HepG2 (cell line): ENCODE measurements at regions of chr18 and their contacts with region 1.

Region 1: DNA sequence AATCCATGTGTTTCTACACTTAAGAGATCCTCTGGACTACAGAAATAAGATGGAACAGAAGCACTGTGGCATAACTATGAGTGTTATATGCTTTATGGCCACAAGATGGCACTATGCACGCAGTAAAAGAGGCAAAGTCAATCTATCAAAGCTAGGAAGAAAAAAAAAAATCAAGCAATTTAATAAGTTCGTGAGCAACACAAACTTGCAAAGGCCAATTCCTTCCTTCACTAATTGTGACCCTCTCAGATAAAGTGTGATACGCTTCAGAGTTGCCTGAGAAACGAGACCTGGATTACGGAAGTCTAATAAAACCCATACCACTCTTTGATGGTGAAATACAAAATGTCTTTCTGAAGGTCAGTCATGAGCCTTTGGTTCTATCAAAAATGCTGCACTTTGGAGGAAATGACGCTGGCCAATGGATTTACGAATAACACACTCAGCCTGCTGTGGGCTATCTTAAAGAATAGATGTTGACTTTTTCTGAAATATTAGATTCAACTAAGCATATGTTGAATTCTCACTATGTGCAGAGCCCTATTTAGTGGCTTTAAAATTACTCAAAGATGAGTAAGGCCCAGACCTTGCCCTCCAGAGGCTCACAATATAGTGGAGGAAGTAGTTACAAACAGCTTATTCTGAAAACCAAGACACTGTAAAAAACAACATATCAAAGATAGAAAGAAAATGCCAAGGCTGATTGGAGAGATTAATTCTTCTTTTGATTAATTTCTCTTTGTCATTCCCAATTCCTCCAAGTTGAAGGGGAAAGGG is 35.5 kb upstream of the TTR start:
- DNase-seq: peak; percentile 58
- ATAC-seq: peak; percentile 53
- H3K4me3 ChIP-seq: peak overlapping the region in 2 of 3 experiments; percentile 10 to 36; a peak in 1 of 6 replicates
- H3K27ac ChIP-seq: no peak overlapping the region
- H3K4me1 ChIP-seq: peaks cover 55% of the 10 kb centered on the region
- H3K27me3 ChIP-seq: no peaks in the 10 kb centered on the region
- CTCF ChIP-seq: peak; percentile 85
- EP300 ChIP-seq: no peak
- POLR2A ChIP-seq: no peak
- RAD21 ChIP-seq: peak; percentile 82

Region 2: DNA sequence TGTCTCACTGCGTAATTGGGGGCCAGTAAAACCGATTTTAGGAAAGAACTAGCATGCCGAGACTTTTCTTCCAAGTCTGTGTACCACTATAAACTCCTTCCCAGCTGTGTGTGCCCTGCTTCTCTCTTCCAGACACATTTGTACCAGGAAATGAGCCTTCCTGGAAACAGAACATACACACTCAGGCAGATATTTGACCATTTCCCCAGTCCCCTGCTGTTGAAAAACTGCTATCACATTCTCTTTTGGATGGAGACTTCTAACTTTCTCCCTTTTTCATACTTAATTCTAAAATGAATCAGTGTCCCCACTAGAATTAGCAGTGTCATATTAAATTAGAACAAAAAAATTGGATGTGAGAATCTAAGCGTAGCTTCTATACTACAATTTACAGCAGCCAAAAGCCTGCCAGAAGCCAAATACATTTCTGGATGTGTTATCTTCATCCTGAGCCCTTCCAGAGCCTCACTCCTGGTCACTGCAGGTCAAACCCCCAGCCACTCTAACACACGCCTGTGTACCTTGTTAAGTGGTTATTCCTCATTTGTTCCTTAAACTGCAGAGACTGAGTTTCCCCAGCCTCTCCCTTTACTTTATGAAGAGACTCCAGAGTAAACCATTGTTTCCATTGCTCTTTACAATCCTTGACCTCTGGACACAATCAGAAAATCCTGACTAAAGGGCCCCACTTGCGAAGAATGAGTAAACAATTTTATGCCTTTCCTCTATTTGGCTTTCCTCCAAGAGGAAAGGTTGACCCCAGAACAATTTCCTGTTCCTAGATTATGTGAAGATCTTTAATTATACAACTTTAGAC is 159.2 kb before region 1 on chr18:
- CTCF ChIA-PET with region 1: no interaction called
- POLR2A ChIA-PET with region 1: no interaction called
- in situ Hi-C with region 1: no loop called
- intact Hi-C with region 1: no loop called
- DNase-seq: peak; percentile 92
- ATAC-seq: peak; percentile 79
- H3K4me3 ChIP-seq: peak overlapping the region in 1 of 3 experiments; percentile 15; a peak in 1 of 6 replicates
- H3K27ac ChIP-seq: peak overlapping the region; percentile 94
- H3K4me1 ChIP-seq: peaks cover 73% of the 10 kb centered on the region
- H3K27me3 ChIP-seq: no peaks in the 10 kb centered on the region
- CTCF ChIP-seq: no peak
- EP300 ChIP-seq: peak; percentile 23 to 95; a peak in 3 of 4 replicates
- POLR2A ChIP-seq: no peak
- RAD21 ChIP-seq: peak; percentile 6; the same call in 1 of the 2 replicates

Region 3: GRCh38 chr18:31497837-31498573 is 58.2 kb before region 1 on chr18 and contains the start of gene DSG2:
- CTCF ChIA-PET with region 1: no interaction called
- POLR2A ChIA-PET with region 1: no interaction called
- in situ Hi-C with region 1: no loop called
- intact Hi-C with region 1: loop called (anchors 5 kb)
- DNase-seq: peak; percentile 43
- ATAC-seq: peak; percentile 90
- H3K4me3 ChIP-seq: peak within 1 kb of the TSS; percentile 94 to 100 (median 99)
- H3K27ac ChIP-seq: peak within 1 kb of the TSS; percentile 82
- H3K4me1 ChIP-seq: peaks cover 27% of the 10 kb centered on the region
- H3K27me3 ChIP-seq: no peaks in the 10 kb centered on the region; a peak in 1 of 5 replicates
- CTCF ChIP-seq: no peak
- EP300 ChIP-seq: no peak
- POLR2A ChIP-seq: peak; percentile 58 to 70
- RAD21 ChIP-seq: no peak
- total RNA-seq, gene DSG2: 23.3 and 24.4 TPM in 2 replicates

Region 4: GRCh38 chr18:31596081-31596872 is 40.1 kb after region 1 on chr18:
- CTCF ChIA-PET with region 1: no interaction called
- POLR2A ChIA-PET with region 1: interaction called, 5 read pairs
- in situ Hi-C with region 1: no loop called
- intact Hi-C with region 1: loop called (anchors 5 kb)
- DNase-seq: peak; percentile 67
- ATAC-seq: peak; percentile 28
- H3K4me3 ChIP-seq: no peak overlapping the region; a peak in 1 of 6 replicates
- H3K27ac ChIP-seq: peak overlapping the region; percentile 57
- H3K4me1 ChIP-seq: peaks cover 59% of the 10 kb centered on the region
- H3K27me3 ChIP-seq: no peaks in the 10 kb centered on the region
- CTCF ChIP-seq: no peak
- EP300 ChIP-seq: peak in 1 of 2 experiments; percentile 50; a peak in 2 of 4 replicates
- POLR2A ChIP-seq: peak in 1 of 2 experiments; percentile 15; a peak in 1 of 4 replicates
- RAD21 ChIP-seq: no peak

Region 5: GRCh38 chr18:31626409-31626808 is 70.2 kb after region 1 on chr18:
- CTCF ChIA-PET with region 1: interaction called, 42 read pairs
- POLR2A ChIA-PET with region 1: no interaction called
- in situ Hi-C with region 1: loop called (anchors 5 kb)
- intact Hi-C with region 1: loop called (anchors 1 kb)
- DNase-seq: peak; percentile 30
- ATAC-seq: peak; percentile 84
- H3K4me3 ChIP-seq: no peak overlapping the region
- H3K27ac ChIP-seq: no peak overlapping the region
- H3K4me1 ChIP-seq: peaks cover 12% of the 10 kb centered on the region
- H3K27me3 ChIP-seq: no peaks in the 10 kb centered on the region
- CTCF ChIP-seq: peak; percentile 85
- EP300 ChIP-seq: no peak
- POLR2A ChIP-seq: no peak
- RAD21 ChIP-seq: peak; percentile 64; the same call in 1 of the 2 replicates

Region 6: GRCh38 chr18:31722369-31722957 is 166.3 kb after region 1 on chr18:
- CTCF ChIA-PET with region 1: interaction called, 20 read pairs
- POLR2A ChIA-PET with region 1: no interaction called
- in situ Hi-C with region 1: loop called (anchors 5 kb)
- intact Hi-C with region 1: loop called (anchors 1 kb)
- DNase-seq: peak; percentile 69
- ATAC-seq: peak; percentile 96
- H3K4me3 ChIP-seq: no peak overlapping the region
- H3K27ac ChIP-seq: no peak overlapping the region
- H3K4me1 ChIP-seq: no peaks in the 10 kb centered on the region
- H3K27me3 ChIP-seq: peaks cover 0 to 18% of the 10 kb centered on the region in 2 experiments; a peak in 3 of 5 replicates
- CTCF ChIP-seq: peak; percentile 84
- EP300 ChIP-seq: no peak
- POLR2A ChIP-seq: no peak
- RAD21 ChIP-seq: no peak

Region 7: DNA sequence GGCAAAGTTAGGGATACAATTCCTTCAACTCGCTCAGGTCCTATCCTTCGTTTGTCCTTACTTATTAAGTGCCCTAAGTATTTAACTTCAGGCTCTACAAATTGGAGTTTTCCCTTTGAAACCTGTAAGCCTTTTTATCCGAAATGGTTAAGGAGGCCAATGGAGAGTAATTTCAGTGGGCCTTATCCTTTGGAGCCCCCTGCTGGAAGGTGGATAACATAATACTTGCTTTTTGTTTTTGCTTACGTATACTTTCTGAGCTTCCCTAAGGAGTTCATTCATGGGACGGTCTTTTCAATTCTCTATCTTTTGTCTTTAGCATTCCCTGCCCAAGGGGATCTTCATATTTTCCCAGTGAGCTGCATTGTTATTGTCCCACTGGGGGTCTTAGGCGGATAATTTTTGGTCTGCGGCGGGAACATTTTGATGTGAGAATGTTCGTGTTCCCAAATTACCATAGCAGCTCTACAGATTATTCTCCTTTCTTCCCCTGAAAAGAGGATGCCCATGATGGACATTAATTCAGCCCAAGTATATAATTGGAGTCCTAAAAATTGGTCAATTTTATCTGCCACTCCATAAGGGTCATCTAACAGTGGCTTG is 421.2 kb after region 1 on chr18:
- CTCF ChIA-PET with region 1: interaction called, 5 read pairs
- POLR2A ChIA-PET with region 1: no interaction called
- in situ Hi-C with region 1: loop called (anchors 10 kb)
- intact Hi-C with region 1: loop called (anchors 10 kb)
- DNase-seq: peak; percentile 68
- ATAC-seq: peak; percentile 83
- H3K4me3 ChIP-seq: no peak overlapping the region
- H3K27ac ChIP-seq: no peak overlapping the region
- H3K4me1 ChIP-seq: no peaks in the 10 kb centered on the region
- H3K27me3 ChIP-seq: 0 out of 5 replicates have a peak, but pooled peaks cover 0 to 4% of the 10 kb centered on the region in 2 experiments
- CTCF ChIP-seq: peak; percentile 77
- EP300 ChIP-seq: no peak
- POLR2A ChIP-seq: no peak
- RAD21 ChIP-seq: peak; percentile 67